ENCODE measurements at regions of chr12 and their contacts with region 1.

Region 1: GRCh38 chr12:5083955-5084849 is 40.5 kb downstream of the KCNA5 start:
- DNase-seq: peak in 2 of 3 donors; percentile 15 to 35
- H3K4me3 ChIP-seq: no peak overlapping the region
- H3K4me3 Mint-ChIP-seq: peak overlapping the region in 1 of 2 donors; percentile 46
- H3K27ac ChIP-seq: no peak overlapping the region
- H3K27ac Mint-ChIP-seq: no peak overlapping the region
- H3K4me1 ChIP-seq: no peaks in the 10 kb centered on the region
- H3K4me1 Mint-ChIP-seq: no peaks in the 10 kb centered on the region
- H3K27me3 ChIP-seq: no peaks in the 10 kb centered on the region
- H3K27me3 Mint-ChIP-seq: peaks cover 0 to 9% (median 5%) of the 10 kb centered on the region in 3 donors
- CTCF ChIP-seq: peak; percentile 78

Region 2: DNA sequence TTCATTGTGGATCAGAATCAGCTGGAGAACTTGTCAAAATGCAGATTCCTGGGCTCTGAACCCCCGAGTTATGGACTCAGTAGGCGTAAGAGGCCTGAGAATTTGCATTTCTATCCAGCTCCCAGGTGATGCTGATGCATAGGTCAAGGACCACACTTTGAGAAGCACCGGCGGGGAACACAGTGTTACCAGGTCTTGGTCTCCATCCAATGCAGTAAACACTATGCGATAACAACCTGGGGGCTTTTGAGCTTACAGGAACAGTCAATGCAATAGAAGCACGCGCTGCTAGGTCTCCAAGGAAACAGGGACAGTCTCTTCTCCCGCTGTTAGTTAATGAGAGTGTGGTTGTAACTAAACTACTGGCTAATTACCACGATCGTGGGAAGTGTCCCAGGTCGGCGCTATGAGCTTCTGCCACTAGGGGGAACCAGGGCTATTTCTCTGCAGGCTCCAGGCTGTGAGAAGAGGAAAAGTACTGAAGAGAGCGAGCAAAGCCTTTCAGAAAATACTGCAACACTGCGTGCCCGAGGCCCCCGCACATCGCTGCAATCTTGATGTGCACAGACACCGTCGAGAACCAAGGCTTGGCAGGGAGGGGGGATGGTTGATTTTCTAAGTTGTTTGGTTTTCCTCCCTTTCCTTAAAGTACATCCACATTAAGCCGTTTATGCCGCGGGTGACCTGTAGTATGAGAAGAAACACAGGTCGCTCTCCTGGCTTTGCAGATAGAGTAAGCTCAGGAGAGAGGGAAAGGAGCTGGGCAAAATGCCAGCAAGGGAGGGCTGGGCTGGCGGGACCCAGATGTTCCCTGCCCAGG is 226.5 kb before region 1 on chr12:
- intact Hi-C with region 1: loop called (anchors 5 to 10 kb)
- DNase-seq: peak; percentile 10 to 33 (median 22)
- H3K4me3 ChIP-seq: peak overlapping the region in 1 of 3 experiments; percentile 7
- H3K4me3 Mint-ChIP-seq: peak overlapping the region; percentile 52 to 77
- H3K27ac ChIP-seq: no peak overlapping the region
- H3K27ac Mint-ChIP-seq: peak overlapping the region in 1 of 7 donors; percentile 43
- H3K4me1 ChIP-seq: peaks cover 0 to 3% of the 10 kb centered on the region in 2 donors
- H3K4me1 Mint-ChIP-seq: peaks cover 8% of the 10 kb centered on the region
- H3K27me3 ChIP-seq: peaks cover 11 to 14% of the 10 kb centered on the region in 2 donors
- H3K27me3 Mint-ChIP-seq: peaks cover 23 to 34% (median 30%) of the 10 kb centered on the region in 3 donors
- CTCF ChIP-seq: peak; percentile 91

Region 3: DNA sequence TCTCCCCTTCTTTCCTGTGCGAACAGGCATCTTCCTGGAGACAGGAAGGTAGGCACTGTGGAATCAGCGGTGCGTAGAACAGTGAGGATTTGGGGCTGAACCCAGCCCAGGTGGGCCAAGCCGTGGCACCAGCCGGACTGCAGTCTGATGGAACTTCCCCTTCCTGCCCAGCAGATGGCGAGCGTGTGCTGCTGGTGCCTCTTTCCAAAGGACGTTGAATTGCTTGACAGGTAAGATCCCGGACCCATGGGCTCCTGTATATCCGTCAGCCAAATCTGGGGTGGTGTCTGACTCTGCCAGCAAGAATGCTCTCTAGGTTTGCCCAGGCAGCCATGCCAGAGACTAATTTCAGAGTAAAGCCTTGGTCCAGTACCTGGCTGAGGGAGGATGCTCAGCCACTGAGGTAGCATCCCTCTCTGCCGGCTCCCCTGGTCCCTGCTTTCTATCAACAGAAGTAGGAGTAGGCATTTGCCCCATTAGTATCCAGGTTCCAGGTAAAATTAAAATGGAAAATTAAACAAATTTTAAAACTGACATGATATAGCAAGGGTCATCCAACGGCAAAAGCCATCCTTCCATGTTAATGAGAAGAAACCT is 61.6 kb before region 1 on chr12:
- intact Hi-C with region 1: loop called (anchors 1 to 2 kb)
- DNase-seq: peak; percentile 13 to 43 (median 22)
- H3K4me3 ChIP-seq: no peak overlapping the region
- H3K4me3 Mint-ChIP-seq: no peak overlapping the region
- H3K27ac ChIP-seq: no peak overlapping the region
- H3K27ac Mint-ChIP-seq: no peak overlapping the region
- H3K4me1 ChIP-seq: no peaks in the 10 kb centered on the region
- H3K4me1 Mint-ChIP-seq: no peaks in the 10 kb centered on the region
- H3K27me3 ChIP-seq: peaks cover 0 to 1% of the 10 kb centered on the region in 2 donors
- H3K27me3 Mint-ChIP-seq: peaks cover 5 to 16% (median 7%) of the 10 kb centered on the region in 3 donors
- CTCF ChIP-seq: peak; percentile 91

Region 4: DNA sequence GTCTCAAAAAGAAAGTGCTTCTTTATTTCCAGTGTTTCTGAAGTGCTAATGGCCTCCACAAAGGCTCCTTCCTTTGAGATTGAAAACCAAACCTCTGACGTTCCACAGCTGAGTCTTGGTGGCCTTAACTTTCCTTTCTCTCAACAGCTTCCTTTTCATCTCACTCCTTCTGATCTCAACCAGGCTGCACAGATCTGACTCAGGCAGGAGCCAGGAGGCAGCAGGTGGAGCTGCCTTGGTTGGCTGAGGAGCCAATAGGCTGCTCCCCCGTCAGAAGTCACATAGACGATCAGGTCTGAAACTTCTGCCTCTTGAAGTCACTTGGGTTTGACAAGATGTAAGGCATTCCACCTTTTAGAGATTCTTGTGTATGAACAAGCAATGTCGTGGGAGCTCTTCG is 49.6 kb before region 1 on chr12:
- intact Hi-C with region 1: no loop called
- DNase-seq: no peak
- H3K4me3 ChIP-seq: no peak overlapping the region
- H3K4me3 Mint-ChIP-seq: no peak overlapping the region
- H3K27ac ChIP-seq: no peak overlapping the region
- H3K27ac Mint-ChIP-seq: no peak overlapping the region
- H3K4me1 ChIP-seq: no peaks in the 10 kb centered on the region
- H3K4me1 Mint-ChIP-seq: no peaks in the 10 kb centered on the region
- H3K27me3 ChIP-seq: peaks cover 9 to 13% of the 10 kb centered on the region in 2 donors
- H3K27me3 Mint-ChIP-seq: peaks cover 13 to 18% (median 16%) of the 10 kb centered on the region in 3 donors
- CTCF ChIP-seq: no peak

Measured in CD14-positive monocyte (primary cell).